ENCODE measurements at regions of chr11 and their contacts with region 1.

Region 1: DNA sequence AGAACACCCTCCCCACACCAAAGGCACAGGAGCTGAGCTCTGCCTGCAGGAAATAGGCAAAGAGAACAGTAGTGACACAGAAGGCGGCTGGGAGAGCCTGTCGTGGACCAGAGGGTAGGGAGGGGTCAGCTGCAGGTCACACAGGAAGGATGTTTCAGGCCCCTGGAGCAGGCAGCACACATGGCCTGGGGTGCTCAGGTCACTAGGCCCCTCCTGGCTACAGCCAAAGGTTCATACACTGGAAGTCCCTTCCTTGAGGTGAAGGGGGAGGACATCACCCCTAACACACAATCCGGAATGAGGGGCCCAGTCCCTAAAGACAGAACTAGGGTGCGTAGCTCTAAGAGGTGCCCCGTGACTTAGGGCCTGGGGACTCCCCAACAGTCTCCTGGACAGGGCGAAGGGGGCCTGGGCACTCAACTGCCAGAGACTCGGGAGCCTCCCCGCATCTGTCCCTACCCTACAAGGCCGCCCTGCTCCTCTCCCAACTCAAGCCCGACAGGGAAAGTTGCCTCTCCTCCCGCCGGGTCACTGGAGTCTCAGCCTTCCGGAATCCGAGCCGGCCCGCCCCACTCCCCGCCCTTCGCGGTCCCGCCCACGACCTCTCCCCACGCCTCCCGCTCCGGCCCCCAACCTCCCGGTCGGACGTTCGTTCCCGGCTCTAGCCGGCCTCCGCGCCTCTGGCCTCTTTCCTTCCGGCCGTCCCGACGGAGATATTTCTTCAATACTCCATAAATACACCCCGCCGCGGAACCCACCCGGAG is at the start of gene CYB5R2:
- DNase-seq: no peak
- H3K4me3 ChIP-seq: peak within 1 kb of the TSS; percentile 59
- CTCF ChIP-seq: no peak

Region 2: GRCh38 chr11:7495882-7496551 is 177.1 kb before region 1 on chr11:
- CTCF ChIA-PET with region 1: no interaction called
- POLR2A ChIA-PET with region 1: no interaction called
- DNase-seq: no peak
- H3K4me3 ChIP-seq: no peak overlapping the region
- CTCF ChIP-seq: no peak

Region 3: GRCh38 chr11:7696424-7696823 is 23.3 kb after region 1 on chr11:
- CTCF ChIA-PET with region 1: interaction called, 50 read pairs
- POLR2A ChIA-PET with region 1: no interaction called
- DNase-seq: no peak
- H3K4me3 ChIP-seq: no peak overlapping the region
- CTCF ChIP-seq: no peak

Measured in AG04449 (cell line).